Common myeloid progenitor, CD34-positive (primary cell): ENCODE measurements at regions of chr10 and their contacts with region 1.

Region 1: GRCh38 chr10:89251409-89252224 is at the start of gene LIPA:
- DNase-seq: peak; percentile 98 to 99 (median 99)
- H3K4me3 ChIP-seq: peak within 1 kb of the TSS; percentile 72 to 96 (median 87)
- H3K27ac ChIP-seq: peak within 1 kb of the TSS in 1 of 2 experiments; percentile 58
- H3K4me1 ChIP-seq: peaks cover 3 to 23% (median 10%) of the 10 kb centered on the region in 4 experiments
- H3K27me3 ChIP-seq: no peaks in the 10 kb centered on the region

Region 2: GRCh38 chr10:89207181-89207800 is 44.3 kb before region 1 on chr10 and contains the start of gene CH25H:
- CTCF ChIA-PET with region 1: no interaction called
- POLR2A ChIA-PET with region 1: no interaction called
- DNase-seq: peak in 2 of 3 donors; percentile 60 to 70
- H3K4me3 ChIP-seq: peak within 1 kb of the TSS; percentile 42 to 82 (median 63)
- H3K27ac ChIP-seq: no peak within 1 kb of the TSS
- H3K4me1 ChIP-seq: peaks cover 0 to 26% (median 23%) of the 10 kb centered on the region in 4 experiments
- H3K27me3 ChIP-seq: peaks cover 8 to 63% (median 25%) of the 10 kb centered on the region in 5 experiments

Region 3: DNA sequence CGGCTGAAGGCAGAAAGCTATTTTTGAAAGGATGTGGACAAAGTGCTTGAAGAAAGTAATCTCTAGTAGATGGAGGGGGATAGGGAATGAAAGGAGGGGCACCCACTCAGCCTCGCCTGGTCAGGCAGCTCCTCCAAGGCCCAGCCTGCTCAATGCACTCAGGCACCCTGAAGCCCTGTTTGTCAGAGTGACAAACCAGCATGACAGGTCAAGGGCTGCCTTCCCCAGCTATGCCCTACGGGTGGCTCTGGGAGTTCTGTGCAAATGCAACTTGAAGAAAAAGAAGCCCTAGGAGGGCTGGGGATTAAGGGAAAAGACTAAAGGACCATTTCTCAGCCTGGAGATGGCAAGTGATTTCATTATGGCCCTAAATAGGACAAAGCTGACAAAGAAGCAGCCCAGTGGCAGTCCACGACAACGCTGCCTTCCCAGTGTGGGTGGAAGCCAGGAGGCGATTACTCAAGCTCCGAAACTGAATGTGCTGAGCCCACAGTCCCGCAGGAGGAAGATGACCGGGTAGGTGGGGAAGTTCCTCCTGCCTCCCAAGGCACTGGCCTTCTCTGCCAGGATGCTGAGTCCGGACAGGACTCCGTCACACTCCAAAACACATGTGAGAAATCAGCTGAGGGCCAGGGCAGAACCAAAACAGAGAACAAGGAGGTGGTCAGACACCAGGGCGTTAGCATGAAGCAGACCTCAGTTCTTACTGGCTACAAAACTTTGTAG is 16.4 kb before region 1 on chr10:
- CTCF ChIA-PET with region 1: interaction called, 19 read pairs
- POLR2A ChIA-PET with region 1: no interaction called
- DNase-seq: no peak
- H3K4me3 ChIP-seq: no peak overlapping the region
- H3K27ac ChIP-seq: no peak overlapping the region
- H3K4me1 ChIP-seq: no peaks in the 10 kb centered on the region
- H3K27me3 ChIP-seq: no peaks in the 10 kb centered on the region

Region 4: DNA sequence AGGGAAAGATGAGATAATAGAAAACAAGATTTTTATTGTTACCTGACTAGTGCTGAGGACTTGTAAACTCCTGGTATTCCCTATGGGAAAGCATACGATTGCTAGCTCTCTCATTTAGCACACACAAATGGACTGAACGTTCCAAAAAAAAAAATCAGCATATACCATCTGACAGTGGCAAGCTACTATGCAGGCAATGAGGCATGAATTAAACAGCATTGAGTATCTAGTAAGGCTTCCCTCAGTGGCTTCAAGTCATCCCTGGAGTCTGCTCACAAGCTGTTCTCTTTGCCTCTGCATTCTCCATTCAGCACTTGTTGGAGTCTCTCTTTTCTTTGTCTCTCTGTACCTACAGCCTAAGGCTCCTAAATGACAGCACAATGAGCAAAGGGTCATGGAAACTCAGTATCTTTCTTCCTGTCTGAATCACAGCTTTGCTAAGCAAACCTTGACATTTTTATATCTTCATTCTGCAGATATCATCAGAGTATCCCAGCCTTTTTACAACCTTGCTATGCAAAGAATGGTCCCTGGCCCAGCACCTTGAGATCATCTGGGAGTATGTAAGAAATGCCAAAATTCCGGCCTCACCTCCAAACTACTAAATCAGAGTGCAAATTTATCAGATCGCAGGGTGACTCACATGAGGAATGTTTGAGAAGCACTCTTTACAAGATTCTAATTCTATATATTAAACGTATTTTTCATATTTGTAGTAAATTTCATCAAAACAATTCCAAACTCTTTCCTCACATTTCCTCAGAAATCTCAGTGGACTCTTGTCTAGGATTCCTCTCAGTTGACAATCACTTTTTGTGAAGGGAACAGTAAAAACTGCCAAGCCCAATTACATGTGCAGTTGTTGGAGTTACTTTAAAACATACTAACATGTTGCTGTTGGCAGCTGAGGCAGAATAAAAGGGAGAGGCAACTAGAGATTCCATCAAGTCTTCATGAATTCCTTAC is 10.8 kb after region 1 on chr10:
- CTCF ChIA-PET with region 1: interaction called, 12 read pairs
- POLR2A ChIA-PET with region 1: no interaction called
- DNase-seq: no peak
- H3K4me3 ChIP-seq: no peak overlapping the region
- H3K27ac ChIP-seq: no peak overlapping the region
- H3K4me1 ChIP-seq: peaks cover 0 to 4% (median 0%) of the 10 kb centered on the region in 4 experiments
- H3K27me3 ChIP-seq: no peaks in the 10 kb centered on the region

Region 5: GRCh38 chr10:89481662-89482061 is 230.0 kb after region 1 on chr10:
- CTCF ChIA-PET with region 1: no interaction called
- POLR2A ChIA-PET with region 1: no interaction called
- DNase-seq: no peak
- H3K4me3 ChIP-seq: no peak overlapping the region
- H3K27ac ChIP-seq: no peak overlapping the region
- H3K4me1 ChIP-seq: peaks cover 0 to 2% (median 0%) of the 10 kb centered on the region in 4 experiments
- H3K27me3 ChIP-seq: no peaks in the 10 kb centered on the region